Heart left ventricle (tissue), 16 donors: ENCODE measurements at regions of chr4 and their contacts with region 1.

Region 1: DNA sequence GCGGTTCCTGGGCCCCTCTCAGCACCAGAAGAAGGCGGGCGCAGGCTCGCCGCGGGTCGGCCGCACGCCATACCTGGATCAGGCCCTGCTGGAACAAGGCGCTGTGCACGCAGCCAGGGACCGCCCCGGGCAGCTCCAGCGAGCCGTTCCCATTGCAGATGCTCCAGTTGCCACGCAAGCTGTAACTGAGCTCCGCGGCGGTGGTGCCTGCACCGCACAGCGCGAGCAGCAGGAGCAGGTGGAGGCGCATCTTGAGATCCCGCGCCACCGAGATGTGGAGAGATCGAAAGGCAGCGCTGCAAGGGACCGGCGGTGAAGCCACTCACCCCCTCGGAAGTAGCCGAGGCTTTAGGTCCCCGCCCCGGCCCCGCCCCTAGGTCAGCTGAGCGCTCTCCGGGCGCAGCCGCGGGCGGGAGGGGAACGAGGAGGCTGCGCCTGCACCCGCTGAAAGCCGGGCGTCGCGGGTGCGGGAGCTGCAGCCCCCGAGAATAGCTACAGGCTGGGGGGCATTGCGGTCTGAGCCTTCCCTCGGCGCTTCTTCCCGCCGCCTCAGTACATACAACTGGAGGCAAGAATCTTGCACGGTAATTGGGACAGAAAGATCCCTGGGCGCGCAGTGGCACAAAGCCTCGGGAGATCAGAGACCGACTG is at the start of gene MANBA:
- DNase-seq: peak; percentile 86 to 93 (median 89)
- ATAC-seq: peak; percentile 96 to 99 (median 98)
- H3K4me3 ChIP-seq: peak within 1 kb of the TSS; percentile 70 to 99 (median 84)
- H3K27ac ChIP-seq: peak within 1 kb of the TSS in 11 of 12 donors; percentile 70 to 98 (median 82)
- H3K4me1 ChIP-seq: peaks cover 0 to 34% (median 11%) of the 10 kb centered on the region in 12 donors
- H3K27me3 ChIP-seq: no peaks in the 10 kb centered on the region
- CTCF ChIP-seq: peak in 1 of 12 donors; percentile 22
- POLR2A ChIP-seq: peak in 1 of 2 donors; percentile 72
- total RNA-seq, gene MANBA: 25.0 to 44.0 (median 36.9) TPM

Region 2: DNA sequence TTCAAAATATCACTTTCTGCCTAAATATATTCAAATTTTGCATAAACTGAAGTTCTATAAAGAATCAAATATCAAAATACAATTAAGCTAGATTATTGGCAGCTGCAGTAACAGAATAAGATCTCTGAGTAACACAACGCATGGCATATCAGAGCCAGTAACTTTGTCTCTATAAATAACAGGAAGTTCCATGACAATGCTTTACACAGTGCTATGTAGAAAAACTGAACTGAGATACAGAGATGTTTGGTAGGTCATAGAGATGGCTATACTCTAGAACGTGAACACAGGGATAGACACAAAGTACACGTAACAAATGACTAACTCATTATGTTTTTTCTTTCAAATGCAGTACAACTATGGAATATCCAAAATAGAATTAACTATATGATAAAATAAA is 48.4 kb after region 1 on chr4:
- intact Hi-C with region 1: loop called in 2 of 10 experiments (anchors 5 kb)
- DNase-seq: no peak
- ATAC-seq: peak; percentile 84 to 95 (median 92)
- H3K4me3 ChIP-seq: no peak overlapping the region
- H3K27ac ChIP-seq: peak overlapping the region in 4 of 12 donors; percentile 19 to 32 (median 26)
- H3K4me1 ChIP-seq: peaks cover 10 to 86% (median 67%) of the 10 kb centered on the region in 12 donors
- H3K27me3 ChIP-seq: no peaks in the 10 kb centered on the region
- CTCF ChIP-seq: no peak
- POLR2A ChIP-seq: no peak

Region 3: DNA sequence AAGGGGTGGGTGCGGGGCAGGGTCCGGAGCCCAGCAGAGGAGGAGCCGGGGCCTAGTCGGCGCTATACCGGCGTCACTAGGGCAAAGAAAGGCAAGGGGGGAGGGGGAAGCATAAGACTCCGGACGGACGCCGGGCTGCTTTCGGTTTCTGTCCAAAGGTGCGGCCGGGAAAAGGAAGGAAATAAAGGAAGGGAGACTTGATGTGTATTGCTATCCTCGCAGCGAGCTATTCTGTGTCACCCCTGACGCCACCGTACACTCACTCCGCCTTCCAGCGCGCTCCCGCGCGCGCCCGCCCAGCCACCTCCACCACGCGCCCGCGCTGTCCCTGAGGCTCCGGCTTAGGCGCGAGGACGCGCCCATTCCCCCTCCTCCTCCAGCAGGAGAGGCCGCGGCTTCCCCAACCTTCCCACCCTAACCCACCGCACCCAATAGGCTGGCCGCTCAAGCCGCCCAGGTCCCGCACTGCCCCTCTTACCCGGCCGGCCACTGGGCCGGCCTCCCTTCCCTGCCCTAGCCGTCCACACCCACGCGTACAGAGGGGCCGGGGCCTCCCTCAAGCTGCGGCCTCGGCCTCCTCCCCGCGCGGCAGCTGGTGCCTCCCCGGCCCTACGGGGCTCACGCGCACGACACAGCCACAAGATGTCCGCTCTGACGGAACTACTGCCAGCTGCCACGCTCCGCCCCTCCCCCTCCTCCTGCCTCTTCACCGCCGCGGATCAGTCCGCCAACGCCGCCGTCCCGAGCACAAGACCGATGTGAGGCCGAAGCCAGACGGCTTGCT is 66.3 kb after region 1 on chr4 and contains the start of gene UBE2D3:
- intact Hi-C with region 1: loop called in 3 of 10 experiments (anchors 2 kb)
- DNase-seq: peak; percentile 94 to 97 (median 95)
- ATAC-seq: peak; percentile 59 to 78 (median 74)
- H3K4me3 ChIP-seq: peak within 1 kb of the TSS; percentile 83 to 99 (median 91)
- H3K27ac ChIP-seq: peak within 1 kb of the TSS; percentile 100
- H3K4me1 ChIP-seq: peaks cover 0 to 46% (median 37%) of the 10 kb centered on the region in 12 donors
- H3K27me3 ChIP-seq: no peaks in the 10 kb centered on the region
- CTCF ChIP-seq: peak in 4 of 12 donors; percentile 16 to 32 (median 22)
- POLR2A ChIP-seq: peak in 1 of 2 donors; percentile 25
- total RNA-seq, gene UBE2D3: 216 to 381 (median 258) TPM